Lower leg skin (tissue), 4 donors: ENCODE measurements at regions of chrX and their contacts with region 1.

Region 1: DNA sequence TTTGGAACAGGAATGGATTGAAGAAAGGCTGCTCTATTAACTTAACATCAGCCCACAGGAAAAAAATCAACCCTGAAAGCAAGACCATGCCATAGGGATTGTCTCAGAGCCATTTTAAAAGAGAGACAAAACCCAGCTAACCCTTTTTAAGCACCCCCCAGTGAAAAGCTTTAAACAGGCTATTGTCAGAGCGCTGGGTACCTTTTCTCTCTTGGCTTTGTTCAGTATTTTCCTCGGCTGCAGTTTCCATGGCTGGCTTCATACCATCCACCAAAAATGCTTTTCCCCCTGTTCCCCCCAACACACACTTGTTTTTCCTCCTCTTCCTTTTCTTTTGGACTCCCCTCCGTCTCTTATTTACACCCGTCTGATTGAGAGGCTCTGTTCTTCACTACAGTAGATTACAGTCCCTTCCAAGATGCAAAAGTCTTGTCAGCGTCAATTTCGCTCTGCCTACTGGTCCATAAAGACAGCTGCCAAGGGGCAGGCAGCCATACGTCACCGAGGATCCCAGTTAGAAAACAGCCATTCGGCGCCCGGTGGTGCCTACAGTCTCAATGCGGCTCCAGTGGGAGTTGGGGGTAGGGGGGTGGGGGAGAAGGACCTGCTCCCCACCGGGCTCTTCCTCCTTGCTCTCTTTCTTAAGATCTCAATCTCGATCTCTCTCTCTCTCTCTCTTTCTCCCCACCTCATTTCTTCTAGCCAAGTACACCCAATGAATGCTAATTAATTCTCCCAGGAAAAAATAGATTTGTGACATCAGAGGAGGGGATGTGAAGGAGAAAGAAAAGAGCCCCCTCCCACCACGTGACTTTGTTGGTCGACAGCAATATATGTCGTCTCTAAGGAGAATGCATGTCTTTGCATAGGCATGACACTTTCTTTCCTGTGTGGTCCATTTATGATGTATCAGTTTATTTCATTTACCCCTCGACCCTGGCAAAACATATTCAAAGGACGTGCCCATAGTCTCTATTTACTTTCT is at the start of gene GPM6B:
- DNase-seq: no peak
- H3K4me3 ChIP-seq: no peak within 1 kb of the TSS
- CTCF ChIP-seq: no peak
- POLR2A ChIP-seq: no peak
- total RNA-seq, gene GPM6B: 4.6 to 22.8 (median 12.3) TPM

Region 2: GRCh38 chrX:13855689-13856450 is 38.9 kb after region 1 on chrX:
- intact Hi-C with region 1: no loop called
- DNase-seq: no peak
- H3K4me3 ChIP-seq: no peak overlapping the region
- CTCF ChIP-seq: no peak
- POLR2A ChIP-seq: no peak

Region 3: DNA sequence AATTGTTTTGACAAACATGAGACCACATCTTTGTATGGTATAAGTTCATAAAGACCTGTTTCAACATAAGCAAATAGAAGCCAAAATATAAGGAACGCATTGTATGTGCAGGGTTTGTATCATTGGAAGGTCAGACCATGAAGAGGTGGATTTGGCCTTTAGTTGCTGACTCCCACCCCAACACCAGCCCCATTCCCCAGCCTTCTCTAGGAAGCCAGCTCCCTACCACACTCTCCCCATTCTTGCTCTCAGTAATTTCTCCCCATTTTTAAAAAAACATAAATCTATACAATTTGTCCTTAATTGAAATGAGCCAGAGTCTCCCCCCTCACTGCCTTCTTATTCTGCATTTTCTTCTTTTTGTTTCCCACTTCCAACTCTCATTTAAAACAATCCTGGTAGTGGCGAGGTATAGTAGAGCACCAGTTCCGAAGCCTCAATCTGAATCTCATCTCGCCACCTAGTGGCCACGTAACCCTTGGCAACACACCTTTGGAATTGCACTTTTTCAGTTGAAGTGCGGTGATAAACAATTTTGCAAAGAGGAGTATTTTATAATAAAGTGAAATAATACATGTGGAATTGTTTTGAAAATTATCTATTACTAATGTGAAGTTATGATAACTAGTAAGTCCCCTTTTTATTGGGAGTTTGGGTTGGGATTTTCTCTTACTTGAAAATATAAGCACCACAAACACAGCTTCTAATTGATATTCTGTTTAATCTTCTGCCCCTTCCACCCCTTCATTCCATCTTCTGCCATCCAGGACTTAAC is 1326.3 kb after region 1 on chrX:
- intact Hi-C with region 1: loop called (anchors 10 kb)
- DNase-seq: peak in 1 of 2 donors; percentile 16
- H3K4me3 ChIP-seq: no peak overlapping the region
- CTCF ChIP-seq: no peak
- POLR2A ChIP-seq: no peak